ENCODE measurements at regions of chr11 and their contacts with region 1.

Region 1: DNA sequence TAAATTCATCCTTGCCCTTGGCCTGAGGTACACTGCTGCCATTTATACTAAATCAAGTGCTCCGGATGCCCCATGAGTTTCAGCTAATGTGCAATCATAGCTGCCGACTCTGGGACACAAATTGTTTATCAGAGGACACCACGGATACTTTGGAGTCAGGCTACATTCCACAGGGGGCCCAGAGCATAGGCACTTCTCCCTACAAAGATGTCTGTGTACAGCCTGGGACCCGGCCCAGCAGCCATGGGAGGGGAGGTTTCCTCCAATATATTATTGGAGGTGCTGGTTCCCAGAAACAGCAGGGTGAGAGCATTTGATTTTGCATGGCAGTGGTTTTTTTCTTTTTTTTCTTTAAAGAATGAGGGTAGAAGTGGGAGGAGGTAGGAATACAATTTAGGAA is 31.3 kb downstream of the HTR3B start:
- DNase-seq: no peak

Region 2: GRCh38 chr11:113974741-113975470 is 39.0 kb after region 1 on chr11 and contains the start of gene HTR3A:
- intact Hi-C with region 1: loop called in 1 of 2 experiments (anchors 1 kb)
- DNase-seq: no peak
- total RNA-seq, gene HTR3A: not detected

Region 3: GRCh38 chr11:114040706-114041211 is 104.9 kb after region 1 on chr11:
- intact Hi-C with region 1: no loop called
- DNase-seq: peak; percentile 78

Measured in posterior vena cava (tissue), 2 donors.